CD8-positive, alpha-beta T cell (primary cell): ENCODE measurements at regions of chr2 and their contacts with region 1.

Region 1: DNA sequence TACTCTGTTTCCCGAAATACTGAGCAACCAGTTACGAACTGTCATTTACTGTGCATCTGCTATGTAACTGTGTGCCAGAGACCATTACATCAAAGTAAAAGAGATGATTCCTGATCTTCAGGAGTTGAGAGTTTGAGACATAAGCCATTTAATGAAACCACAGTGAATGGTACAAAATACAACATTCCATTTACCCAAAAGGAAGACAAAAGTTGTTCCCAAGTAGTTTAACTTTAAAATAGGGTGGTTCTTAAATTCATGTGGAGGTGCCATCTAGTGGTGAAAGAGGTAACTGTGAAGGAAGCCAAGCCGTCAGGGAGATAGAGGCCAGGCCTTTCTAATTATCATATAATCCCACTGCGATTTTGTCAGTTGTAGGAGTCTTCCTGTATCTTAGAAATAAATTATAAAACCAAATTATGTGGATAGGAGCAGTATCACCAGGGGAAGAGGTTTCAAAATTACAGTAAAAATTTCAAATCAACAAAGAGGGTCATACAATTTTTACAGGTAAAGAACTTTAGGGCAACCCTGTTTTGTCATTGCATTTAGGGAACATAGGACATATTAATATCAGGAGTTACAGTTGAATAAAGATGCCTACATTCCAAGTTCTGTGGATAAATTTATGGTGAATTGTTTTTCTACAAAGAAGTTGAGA is 67.7 kb downstream of the EPAS1 start:
- DNase-seq: peak in 4 of 9 experiments; percentile 26 to 74 (median 52)
- ATAC-seq: peak; percentile 64
- H3K4me3 ChIP-seq: no peak overlapping the region
- H3K4me3 Mint-ChIP-seq: no peak overlapping the region
- H3K27ac ChIP-seq: no peak overlapping the region
- H3K27ac Mint-ChIP-seq: no peak overlapping the region
- H3K4me1 ChIP-seq: peaks cover 21% of the 10 kb centered on the region
- H3K4me1 Mint-ChIP-seq: peaks cover 43% of the 10 kb centered on the region
- H3K27me3 ChIP-seq: no peaks in the 10 kb centered on the region
- H3K27me3 Mint-ChIP-seq: no peaks in the 10 kb centered on the region
- CTCF ChIP-seq: peak; percentile 91

Region 2: DNA sequence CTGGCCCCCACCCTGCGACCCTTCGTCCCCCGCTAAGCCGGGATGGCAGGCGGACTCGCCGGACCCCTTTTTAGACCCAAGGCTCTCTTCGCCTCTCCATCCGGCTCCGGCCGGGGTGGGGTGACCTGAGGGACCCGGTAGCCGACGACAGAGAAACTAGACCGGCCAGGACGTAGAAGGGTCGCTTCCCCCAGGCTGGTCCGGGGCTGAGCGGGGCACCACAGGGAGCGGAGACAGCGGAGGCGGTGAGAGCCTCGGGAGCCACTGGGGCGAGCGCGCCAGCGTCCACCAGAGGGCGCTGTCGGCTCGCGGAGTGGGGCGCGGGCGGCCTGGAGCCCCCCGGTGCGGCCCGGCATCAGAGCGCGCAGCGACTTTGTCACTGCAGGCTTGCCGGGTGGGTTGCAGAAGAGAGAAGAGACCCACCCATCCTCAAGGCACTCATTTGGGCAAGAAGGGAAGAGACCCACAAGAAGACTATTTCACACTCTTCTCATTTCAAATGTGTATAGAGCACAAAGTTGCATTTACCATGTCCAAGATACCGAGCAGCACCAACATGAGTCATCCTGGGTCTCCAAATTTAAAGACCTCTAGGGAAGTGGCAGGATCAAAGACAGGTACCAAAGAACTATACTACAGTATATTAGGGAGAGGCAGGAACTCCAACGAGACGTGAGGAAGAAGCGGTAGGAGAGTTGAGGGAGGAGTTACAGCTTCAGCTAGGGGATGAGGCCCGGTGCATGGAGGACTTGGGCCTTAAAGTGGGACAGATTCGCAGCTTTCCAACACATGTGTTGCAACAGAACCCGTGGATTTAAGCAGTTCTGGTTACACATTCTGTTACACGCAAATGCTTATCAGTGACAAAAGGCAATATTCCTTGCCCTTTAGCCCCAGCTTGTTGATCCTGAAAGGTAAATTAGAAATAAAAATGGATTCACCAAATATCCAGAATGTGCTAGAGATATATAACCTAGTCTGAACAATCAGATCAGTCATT is 721.1 kb before region 1 on chr2:
- CTCF ChIA-PET with region 1: no interaction called
- POLR2A ChIA-PET with region 1: no interaction called
- intact Hi-C with region 1: loop called (anchors 5 kb)
- DNase-seq: peak; percentile 56 to 88 (median 73)
- ATAC-seq: peak; percentile 97
- H3K4me3 ChIP-seq: peak overlapping the region; percentile 22 to 41
- H3K4me3 Mint-ChIP-seq: peak overlapping the region; percentile 49
- H3K27ac ChIP-seq: no peak overlapping the region
- H3K27ac Mint-ChIP-seq: no peak overlapping the region
- H3K4me1 ChIP-seq: peaks cover 9% of the 10 kb centered on the region
- H3K4me1 Mint-ChIP-seq: peaks cover 6% of the 10 kb centered on the region
- H3K27me3 ChIP-seq: peaks cover 0 to 13% of the 10 kb centered on the region in 2 experiments
- H3K27me3 Mint-ChIP-seq: peaks cover 18% of the 10 kb centered on the region
- CTCF ChIP-seq: peak; percentile 81

Region 3: GRCh38 chr2:46010925-46011490 is 353.9 kb before region 1 on chr2:
- CTCF ChIA-PET with region 1: interaction called, 4 read pairs
- POLR2A ChIA-PET with region 1: no interaction called
- intact Hi-C with region 1: loop called (anchors 1 kb)
- DNase-seq: peak in 2 of 9 experiments; percentile 28 to 50
- ATAC-seq: no peak
- H3K4me3 ChIP-seq: no peak overlapping the region
- H3K4me3 Mint-ChIP-seq: no peak overlapping the region
- H3K27ac ChIP-seq: no peak overlapping the region
- H3K27ac Mint-ChIP-seq: no peak overlapping the region
- H3K4me1 ChIP-seq: no peaks in the 10 kb centered on the region
- H3K4me1 Mint-ChIP-seq: no peaks in the 10 kb centered on the region
- H3K27me3 ChIP-seq: no peaks in the 10 kb centered on the region
- H3K27me3 Mint-ChIP-seq: no peaks in the 10 kb centered on the region
- CTCF ChIP-seq: peak; percentile 42

Region 4: GRCh38 chr2:46296840-46297545 is 67.9 kb before region 1 on chr2 and contains the start of gene EPAS1:
- CTCF ChIA-PET with region 1: interaction called, 4 read pairs
- POLR2A ChIA-PET with region 1: no interaction called
- intact Hi-C with region 1: loop called in 1 of 2 experiments (anchors 1 kb)
- DNase-seq: peak; percentile 61 to 92 (median 82)
- ATAC-seq: peak; percentile 85
- H3K4me3 ChIP-seq: peak within 1 kb of the TSS; percentile 66 to 80
- H3K4me3 Mint-ChIP-seq: peak within 1 kb of the TSS; percentile 89
- H3K27ac ChIP-seq: peak within 1 kb of the TSS in 1 of 2 experiments; percentile 15
- H3K27ac Mint-ChIP-seq: no peak within 1 kb of the TSS
- H3K4me1 ChIP-seq: peaks cover 26% of the 10 kb centered on the region
- H3K4me1 Mint-ChIP-seq: peaks cover 25% of the 10 kb centered on the region
- H3K27me3 ChIP-seq: peaks cover 26 to 32% of the 10 kb centered on the region in 2 experiments
- H3K27me3 Mint-ChIP-seq: peaks cover 38% of the 10 kb centered on the region
- CTCF ChIP-seq: no peak
- total RNA-seq, gene EPAS1: 18.5 to 19.7 TPM

Region 5: DNA sequence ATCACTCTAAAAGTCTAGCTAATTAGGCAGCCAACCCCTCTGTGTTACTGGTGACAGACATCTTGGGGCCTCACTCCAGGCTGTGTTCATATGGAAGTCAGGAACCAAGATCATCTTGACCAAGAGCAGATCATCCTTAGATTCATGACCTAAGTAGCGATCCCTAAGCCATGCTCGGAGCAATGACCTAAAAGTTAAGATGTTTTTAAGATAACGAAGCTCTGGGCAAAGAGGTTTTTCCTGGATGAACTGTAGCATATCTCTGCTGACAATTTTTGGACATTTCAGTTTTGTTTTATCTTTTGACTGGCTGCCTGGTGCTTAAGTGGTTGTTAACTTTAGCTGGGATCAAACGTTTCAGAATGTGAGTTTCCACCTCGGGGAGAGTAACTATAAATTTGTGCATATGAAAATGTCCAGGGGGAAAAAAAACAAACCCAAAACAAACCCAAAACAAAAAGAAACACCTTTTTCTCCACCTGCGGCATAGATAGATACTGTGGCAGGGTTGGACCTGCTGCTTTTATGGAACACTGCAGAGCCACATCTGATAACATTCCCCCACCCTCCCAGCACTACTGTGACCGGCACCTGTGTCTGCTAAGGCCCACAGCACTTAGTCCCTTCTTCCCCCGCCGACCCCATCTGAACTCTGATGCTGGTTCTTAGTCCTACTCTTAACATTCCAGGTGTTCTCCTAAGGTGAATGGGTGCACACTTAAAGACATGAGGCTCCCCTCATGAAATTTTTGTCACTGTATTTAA is 22.2 kb before region 1 on chr2:
- CTCF ChIA-PET with region 1: interaction called, 15 read pairs
- POLR2A ChIA-PET with region 1: no interaction called
- intact Hi-C with region 1: loop called in 1 of 2 experiments (anchors 1 kb)
- DNase-seq: no peak
- ATAC-seq: no peak
- H3K4me3 ChIP-seq: no peak overlapping the region
- H3K4me3 Mint-ChIP-seq: no peak overlapping the region
- H3K27ac ChIP-seq: no peak overlapping the region
- H3K27ac Mint-ChIP-seq: no peak overlapping the region
- H3K4me1 ChIP-seq: peaks cover 11% of the 10 kb centered on the region
- H3K4me1 Mint-ChIP-seq: peaks cover 24% of the 10 kb centered on the region
- H3K27me3 ChIP-seq: no peaks in the 10 kb centered on the region
- H3K27me3 Mint-ChIP-seq: no peaks in the 10 kb centered on the region
- CTCF ChIP-seq: no peak

Region 6: DNA sequence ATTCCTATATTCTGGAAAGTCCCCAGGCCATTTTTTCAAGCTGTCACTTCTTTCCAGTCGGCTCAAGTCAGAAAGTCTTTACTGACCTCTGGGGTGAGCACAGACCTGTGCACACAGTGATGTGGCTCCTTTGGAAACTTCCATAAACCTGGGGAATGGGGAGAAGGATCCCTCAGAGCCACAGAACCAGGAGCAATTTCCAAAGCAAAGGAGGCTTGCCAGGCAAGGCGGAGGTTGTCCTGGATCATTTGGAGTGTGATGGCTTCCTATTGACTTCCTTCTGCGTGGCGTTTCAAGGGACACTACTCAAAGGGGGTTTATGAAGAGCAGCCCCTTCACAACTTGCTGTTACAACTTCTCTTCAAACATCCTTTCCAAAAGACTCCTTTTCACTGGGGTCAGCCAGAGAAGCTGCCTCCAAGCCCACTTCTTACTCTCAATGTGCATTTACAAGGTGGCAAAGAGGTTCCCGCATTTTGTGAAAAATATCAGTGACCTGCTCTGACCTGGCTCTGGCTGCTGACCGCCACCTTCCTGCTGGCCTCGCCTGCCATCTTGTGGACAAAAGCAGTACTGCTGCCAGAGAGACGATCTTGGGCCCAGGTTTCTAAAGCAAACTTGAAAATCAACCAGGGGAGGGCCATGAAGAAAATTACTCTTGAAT is 96.2 kb after region 1 on chr2:
- CTCF ChIA-PET with region 1: interaction called, 6 read pairs
- POLR2A ChIA-PET with region 1: no interaction called
- intact Hi-C with region 1: loop called in 1 of 2 experiments (anchors 1 kb)
- DNase-seq: peak; percentile 46 to 87 (median 75)
- ATAC-seq: peak; percentile 71
- H3K4me3 ChIP-seq: no peak overlapping the region
- H3K4me3 Mint-ChIP-seq: no peak overlapping the region
- H3K27ac ChIP-seq: no peak overlapping the region
- H3K27ac Mint-ChIP-seq: no peak overlapping the region
- H3K4me1 ChIP-seq: no peaks in the 10 kb centered on the region
- H3K4me1 Mint-ChIP-seq: peaks cover 15% of the 10 kb centered on the region
- H3K27me3 ChIP-seq: no peaks in the 10 kb centered on the region
- H3K27me3 Mint-ChIP-seq: no peaks in the 10 kb centered on the region
- CTCF ChIP-seq: peak; percentile 99